ENCODE measurements at regions of chr4 and their contacts with region 1.

Region 1: DNA sequence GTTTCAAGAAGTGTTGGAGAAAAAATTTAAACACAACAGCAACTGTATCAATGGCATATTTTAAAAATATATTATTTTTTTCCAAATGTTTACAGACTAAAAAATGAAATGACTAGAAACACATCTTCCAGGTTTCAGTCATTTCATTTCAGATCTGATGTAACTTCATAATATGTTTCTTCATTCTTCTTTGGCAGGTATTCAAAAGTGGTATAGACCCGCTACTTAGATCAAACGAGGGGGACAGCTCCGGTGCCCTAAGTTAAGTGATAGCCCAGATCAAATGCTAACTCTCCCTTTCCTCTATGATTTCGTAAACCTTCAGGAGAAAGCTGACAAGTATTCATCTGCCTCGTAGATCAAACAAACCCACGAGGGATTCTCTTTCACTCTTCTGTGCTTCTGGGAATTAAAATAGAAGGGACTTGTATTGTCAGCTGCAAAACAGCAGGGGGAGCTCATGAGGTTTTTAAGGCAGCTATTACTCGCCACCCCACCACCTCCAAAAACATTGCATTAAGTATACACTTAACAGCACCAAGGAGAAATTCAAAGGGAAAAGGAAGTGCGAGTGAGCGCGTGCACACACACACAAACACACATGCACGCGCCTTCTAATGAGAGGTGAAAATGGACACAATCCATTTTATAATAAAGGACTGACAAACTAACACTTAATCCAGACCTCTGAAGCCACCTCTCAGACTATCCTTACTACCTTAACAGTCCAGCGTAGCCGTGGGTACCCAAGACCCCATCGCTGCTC is 21.4 kb downstream of the HELT start:
- DNase-seq: no peak

Region 2: DNA sequence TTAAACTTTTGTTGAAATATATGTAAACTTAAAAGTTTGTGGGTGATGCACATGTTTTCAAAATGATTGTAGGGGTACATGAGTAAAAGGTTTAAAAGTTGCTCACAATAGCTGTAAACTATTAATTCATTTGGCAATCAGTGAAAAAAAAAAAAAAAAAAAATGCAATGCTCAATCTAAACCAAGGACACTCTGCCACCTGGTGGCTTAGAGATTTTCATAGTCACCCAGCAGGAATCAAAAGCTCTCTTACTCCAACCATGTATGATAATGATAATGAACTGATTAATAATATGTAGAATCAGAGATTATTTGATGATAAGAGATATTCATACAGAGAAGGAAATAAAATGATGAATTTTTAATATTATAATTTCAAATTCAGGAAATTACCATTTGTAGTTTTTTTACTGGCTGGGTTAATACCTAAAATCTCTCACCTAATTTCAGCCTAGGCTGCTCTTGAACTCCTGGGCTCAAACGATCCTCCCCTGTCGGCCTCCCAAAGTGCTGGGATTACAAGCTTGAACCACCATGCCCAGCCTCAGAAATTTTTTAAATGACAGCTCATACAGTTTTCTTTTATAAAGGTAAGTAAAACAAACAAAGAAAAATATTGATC is 56.5 kb after region 1 on chr4:
- intact Hi-C with region 1: loop called (anchors 2 kb)
- DNase-seq: no peak

Region 3: GRCh38 chr4:185304944-185305690 is 265.4 kb after region 1 on chr4:
- intact Hi-C with region 1: no loop called
- DNase-seq: no peak

Measured in cardiac septum (tissue), 1 donor.